ENCODE measurements at regions of chr10 and their contacts with region 1.

Region 1: DNA sequence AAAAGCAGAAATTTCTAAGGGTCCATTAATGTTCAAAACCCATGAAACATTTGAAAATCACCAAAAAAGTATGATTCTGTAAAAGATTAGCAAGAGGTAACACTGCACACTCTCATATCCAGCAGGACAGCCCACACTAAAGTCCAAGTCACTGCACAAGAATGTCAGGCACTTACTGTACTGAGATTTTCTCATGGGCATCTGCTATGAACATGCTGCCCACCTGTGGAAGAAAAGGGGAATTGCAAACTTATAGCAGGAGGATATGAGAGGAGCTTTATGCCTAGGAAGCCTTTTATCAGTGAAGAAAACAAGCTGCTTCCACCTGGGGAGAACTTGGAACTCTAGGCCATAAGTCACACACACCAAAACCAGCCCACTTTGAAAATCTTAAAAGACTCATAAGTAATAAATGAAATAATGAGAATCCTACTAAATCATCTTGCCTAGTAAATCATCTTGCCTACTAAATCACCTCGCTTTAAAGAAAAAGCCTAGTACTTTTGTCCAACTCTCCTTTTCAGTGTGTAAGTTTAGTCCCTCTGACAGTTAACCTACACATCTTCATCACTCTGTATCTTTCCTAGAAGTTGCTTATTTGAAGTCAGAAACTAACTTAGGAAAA is 46.1 kb downstream of the ARMH3 start:
- DNase-seq: peak; percentile 44
- ATAC-seq: peak; percentile 91
- H3K4me3 Mint-ChIP-seq: no peak overlapping the region
- H3K27ac Mint-ChIP-seq: no peak overlapping the region
- H3K4me1 Mint-ChIP-seq: no peaks in the 10 kb centered on the region
- H3K27me3 Mint-ChIP-seq: no peaks in the 10 kb centered on the region
- CTCF ChIP-seq: peak; percentile 90

Region 2: GRCh38 chr10:101830322-101831168 is 179.4 kb before region 1 on chr10:
- CTCF ChIA-PET with region 1: interaction called, 49 read pairs
- POLR2A ChIA-PET with region 1: no interaction called
- intact Hi-C with region 1: no loop called
- DNase-seq: peak; percentile 94
- ATAC-seq: peak; percentile 72
- H3K4me3 Mint-ChIP-seq: peak overlapping the region; percentile 70
- H3K27ac Mint-ChIP-seq: peak overlapping the region; percentile 94
- H3K4me1 Mint-ChIP-seq: peaks cover 43% of the 10 kb centered on the region
- H3K27me3 Mint-ChIP-seq: no peaks in the 10 kb centered on the region
- CTCF ChIP-seq: no peak

Region 3: GRCh38 chr10:101889256-101890210 is 120.4 kb before region 1 on chr10:
- CTCF ChIA-PET with region 1: interaction called, 92 read pairs
- POLR2A ChIA-PET with region 1: no interaction called
- intact Hi-C with region 1: loop called (anchors 1 kb)
- DNase-seq: peak; percentile 92
- ATAC-seq: peak; percentile 80
- H3K4me3 Mint-ChIP-seq: no peak overlapping the region
- H3K27ac Mint-ChIP-seq: no peak overlapping the region
- H3K4me1 Mint-ChIP-seq: no peaks in the 10 kb centered on the region
- H3K27me3 Mint-ChIP-seq: no peaks in the 10 kb centered on the region
- CTCF ChIP-seq: peak; percentile 85

Region 4: DNA sequence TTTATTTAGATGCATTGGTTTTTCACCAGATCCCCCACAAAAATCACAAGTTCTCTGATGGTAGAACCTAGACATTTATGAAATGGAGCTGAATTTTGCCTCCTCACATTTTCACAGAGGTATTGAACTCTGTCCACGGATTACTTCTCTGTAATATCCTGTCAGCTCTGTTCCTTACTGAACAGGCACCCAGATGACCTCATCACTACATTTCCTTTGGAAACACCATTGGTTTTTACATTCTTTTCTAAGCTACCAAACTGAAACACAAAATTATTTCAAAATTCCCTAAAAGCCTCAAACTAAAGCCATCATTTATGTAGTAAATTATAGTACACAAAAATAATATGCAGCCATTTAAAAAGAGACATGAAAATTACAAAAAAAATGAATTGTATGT is 68.0 kb before region 1 on chr10:
- CTCF ChIA-PET with region 1: interaction called, 11 read pairs
- POLR2A ChIA-PET with region 1: no interaction called
- intact Hi-C with region 1: no loop called
- DNase-seq: no peak
- ATAC-seq: no peak
- H3K4me3 Mint-ChIP-seq: no peak overlapping the region
- H3K27ac Mint-ChIP-seq: no peak overlapping the region
- H3K4me1 Mint-ChIP-seq: no peaks in the 10 kb centered on the region
- H3K27me3 Mint-ChIP-seq: no peaks in the 10 kb centered on the region
- CTCF ChIP-seq: no peak

Region 5: DNA sequence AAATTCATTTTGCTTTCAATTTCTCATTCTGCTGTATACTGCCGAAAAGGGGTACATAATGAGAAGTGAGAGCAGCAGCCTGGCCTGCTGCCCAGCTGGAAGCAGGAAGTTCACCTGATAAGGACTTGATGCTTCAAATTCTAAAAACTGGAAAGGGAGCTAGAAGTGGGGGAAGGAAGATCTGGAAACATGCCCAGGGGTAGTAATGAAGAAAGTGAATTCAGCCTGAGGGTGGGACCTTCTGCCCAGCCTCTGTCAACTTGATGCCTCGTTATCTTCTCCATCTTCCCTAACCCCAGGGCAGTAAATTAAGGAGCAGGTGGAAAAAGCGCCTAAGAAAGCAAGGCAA is 23.3 kb before region 1 on chr10:
- CTCF ChIA-PET with region 1: interaction called, 10 read pairs
- POLR2A ChIA-PET with region 1: no interaction called
- intact Hi-C with region 1: no loop called
- DNase-seq: no peak
- ATAC-seq: no peak
- H3K4me3 Mint-ChIP-seq: no peak overlapping the region
- H3K27ac Mint-ChIP-seq: no peak overlapping the region
- H3K4me1 Mint-ChIP-seq: peaks cover 5% of the 10 kb centered on the region
- H3K27me3 Mint-ChIP-seq: no peaks in the 10 kb centered on the region
- CTCF ChIP-seq: no peak

Region 6: GRCh38 chr10:102024799-102025198 is 14.9 kb after region 1 on chr10:
- CTCF ChIA-PET with region 1: interaction called, 12 read pairs
- POLR2A ChIA-PET with region 1: no interaction called
- intact Hi-C with region 1: no loop called
- DNase-seq: no peak
- ATAC-seq: no peak
- H3K4me3 Mint-ChIP-seq: no peak overlapping the region
- H3K27ac Mint-ChIP-seq: no peak overlapping the region
- H3K4me1 Mint-ChIP-seq: peaks cover 3% of the 10 kb centered on the region
- H3K27me3 Mint-ChIP-seq: no peaks in the 10 kb centered on the region
- CTCF ChIP-seq: no peak

Region 7: GRCh38 chr10:102072673-102073527 is 63.0 kb after region 1 on chr10:
- CTCF ChIA-PET with region 1: interaction called, 21 read pairs
- POLR2A ChIA-PET with region 1: no interaction called
- intact Hi-C with region 1: no loop called
- DNase-seq: peak; percentile 89
- ATAC-seq: peak; percentile 93
- H3K4me3 Mint-ChIP-seq: no peak overlapping the region
- H3K27ac Mint-ChIP-seq: no peak overlapping the region
- H3K4me1 Mint-ChIP-seq: peaks cover 2% of the 10 kb centered on the region
- H3K27me3 Mint-ChIP-seq: no peaks in the 10 kb centered on the region
- CTCF ChIP-seq: peak; percentile 93

Region 8: GRCh38 chr10:102583435-102584417 is 573.8 kb after region 1 on chr10:
- CTCF ChIA-PET with region 1: no interaction called
- POLR2A ChIA-PET with region 1: no interaction called
- intact Hi-C with region 1: no loop called
- DNase-seq: peak; percentile 92
- ATAC-seq: peak; percentile 99
- H3K4me3 Mint-ChIP-seq: no peak overlapping the region
- H3K27ac Mint-ChIP-seq: no peak overlapping the region
- H3K4me1 Mint-ChIP-seq: peaks cover 4% of the 10 kb centered on the region
- H3K27me3 Mint-ChIP-seq: no peaks in the 10 kb centered on the region
- CTCF ChIP-seq: peak; percentile 91

Measured in activated CD8-positive, alpha-beta T cell treated with anti-CD3 and anti-CD28 coated beads for 36 hours (primary cell).